Mammary epithelial cell (primary cell): ENCODE measurements at regions of chr14 and their contacts with region 1.

Region 1: GRCh38 chr14:95534299-95535225 is at the start of gene GLRX5:
- DNase-seq: peak; percentile 100
- H3K4me3 ChIP-seq: peak within 1 kb of the TSS; percentile 87 to 93 (median 91)
- H3K27ac ChIP-seq: peak within 1 kb of the TSS; percentile 82
- H3K4me1 ChIP-seq: peaks cover 40% of the 10 kb centered on the region
- H3K27me3 ChIP-seq: no peaks in the 10 kb centered on the region
- CTCF ChIP-seq: no peak
- total RNA-seq, gene GLRX5: 21.2 to 34.6 TPM

Region 2: DNA sequence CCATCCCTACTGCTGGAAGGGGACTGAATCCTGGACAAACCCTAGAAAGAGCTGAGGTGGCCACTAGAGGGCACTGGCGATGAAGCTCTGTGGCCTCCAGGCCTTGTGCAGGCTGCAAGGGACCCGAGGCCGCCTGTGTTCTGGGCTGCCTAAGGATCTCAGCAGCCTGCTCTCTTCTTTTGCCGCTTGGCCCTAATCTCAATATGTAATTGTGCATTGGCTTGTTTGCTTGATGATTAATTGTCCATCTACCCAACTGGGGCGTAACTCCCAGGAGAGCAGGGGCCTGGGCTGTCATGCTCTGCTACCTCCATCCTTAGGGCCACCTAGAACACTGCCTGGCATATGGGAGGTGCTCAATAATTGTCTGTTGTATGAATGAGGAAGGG is 91.9 kb before region 1 on chr14:
- CTCF ChIA-PET with region 1: interaction called, 4 read pairs
- dilution Hi-C with region 1: no loop called
- in situ Hi-C with region 1: loop called (anchors 5 kb)
- intact Hi-C with region 1: no loop called
- DNase-seq: peak; percentile 56
- H3K4me3 ChIP-seq: no peak overlapping the region
- H3K27ac ChIP-seq: no peak overlapping the region
- H3K4me1 ChIP-seq: no peaks in the 10 kb centered on the region
- H3K27me3 ChIP-seq: no peaks in the 10 kb centered on the region
- CTCF ChIP-seq: peak; percentile 93 to 95

Region 3: GRCh38 chr14:95515596-95516552 is 18.7 kb before region 1 on chr14:
- CTCF ChIA-PET with region 1: no interaction called
- dilution Hi-C with region 1: no loop called
- in situ Hi-C with region 1: no loop called
- intact Hi-C with region 1: loop called (anchors 2 kb)
- DNase-seq: peak; percentile 62
- H3K4me3 ChIP-seq: peak overlapping the region; percentile 53 to 58 (median 56)
- H3K27ac ChIP-seq: peak overlapping the region; percentile 28
- H3K4me1 ChIP-seq: peaks cover 45% of the 10 kb centered on the region
- H3K27me3 ChIP-seq: no peaks in the 10 kb centered on the region
- CTCF ChIP-seq: peak in 1 of 2 donors; percentile 30

Region 4: DNA sequence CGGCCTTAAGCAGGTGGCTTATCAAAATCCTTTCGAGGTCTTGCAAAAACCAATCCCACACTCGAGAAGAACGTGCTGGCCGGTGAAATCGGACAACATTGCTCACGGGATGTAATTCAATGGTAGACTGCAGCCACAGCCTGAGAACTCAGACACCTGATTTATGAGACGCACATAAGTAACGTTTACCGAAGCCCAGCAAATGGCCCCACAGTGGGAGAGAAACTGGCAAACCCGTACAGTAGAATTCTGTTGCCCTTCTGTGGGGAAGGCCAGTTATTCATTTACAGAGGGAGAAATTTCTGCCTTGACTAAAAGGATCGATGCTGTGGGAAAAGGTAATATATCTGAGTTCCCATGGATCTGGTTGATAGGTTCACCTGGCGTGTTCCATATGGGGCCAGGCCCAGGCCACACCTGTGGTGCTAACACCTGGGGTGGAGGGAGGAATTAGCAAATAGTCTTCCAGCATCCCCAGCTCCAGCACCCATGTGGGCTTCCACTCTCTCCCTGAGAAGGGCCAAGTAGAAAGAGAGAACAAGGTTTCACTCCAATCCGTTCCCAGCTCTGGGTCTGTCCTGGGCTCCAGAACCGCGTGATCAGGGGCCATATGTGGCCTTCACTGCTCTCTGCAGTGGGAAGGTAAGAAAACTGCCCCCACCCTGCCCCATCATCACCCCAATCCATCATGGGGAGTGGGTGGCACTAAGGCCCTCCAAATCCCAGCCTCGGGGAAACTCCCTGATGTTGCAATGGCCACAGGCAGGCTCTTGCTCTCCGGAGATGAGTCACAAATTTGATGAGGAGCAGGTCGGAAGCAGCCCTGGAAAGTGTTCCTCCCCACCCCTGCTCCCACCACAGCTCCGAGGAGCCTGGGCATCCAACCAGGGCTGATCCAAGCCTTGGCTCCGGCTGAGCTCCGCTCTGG is 734.1 kb after region 1 on chr14:
- CTCF ChIA-PET with region 1: no interaction called
- dilution Hi-C with region 1: no loop called
- in situ Hi-C with region 1: loop called in 1 of 2 experiments (anchors 25 kb)
- intact Hi-C with region 1: no loop called
- DNase-seq: peak; percentile 99
- H3K4me3 ChIP-seq: no peak overlapping the region
- H3K27ac ChIP-seq: peak overlapping the region; percentile 78
- H3K4me1 ChIP-seq: peaks cover 46% of the 10 kb centered on the region
- H3K27me3 ChIP-seq: no peaks in the 10 kb centered on the region
- CTCF ChIP-seq: no peak